ENCODE measurements at regions of chr5 and their contacts with region 1.

Region 1: GRCh38 chr5:73201547-73202513 is 28.8 kb downstream of the TMEM174 start:
- DNase-seq: peak; percentile 46 to 81 (median 69)
- ATAC-seq: peak; percentile 64 to 89 (median 78)
- H3K4me3 ChIP-seq: no peak overlapping the region
- H3K27ac ChIP-seq: no peak overlapping the region
- H3K4me1 ChIP-seq: peaks cover 0 to 7% (median 2%) of the 10 kb centered on the region in 12 donors
- H3K27me3 ChIP-seq: peaks cover 0 to 43% (median 15%) of the 10 kb centered on the region in 9 donors
- CTCF ChIP-seq: peak; percentile 47 to 72 (median 65)
- POLR2A ChIP-seq: no peak

Region 2: GRCh38 chr5:72681781-72682180 is 520.0 kb before region 1 on chr5:
- intact Hi-C with region 1: no loop called
- DNase-seq: no peak
- ATAC-seq: no peak
- H3K4me3 ChIP-seq: no peak overlapping the region
- H3K27ac ChIP-seq: no peak overlapping the region
- H3K4me1 ChIP-seq: no peaks in the 10 kb centered on the region
- H3K27me3 ChIP-seq: peaks cover 0 to 5% (median 0%) of the 10 kb centered on the region in 9 donors
- CTCF ChIP-seq: no peak
- POLR2A ChIP-seq: no peak

Region 3: GRCh38 chr5:73081093-73081492 is 120.7 kb before region 1 on chr5:
- intact Hi-C with region 1: loop called in 4 of 10 experiments (anchors 5 to 10 kb)
- DNase-seq: no peak
- ATAC-seq: no peak
- H3K4me3 ChIP-seq: no peak overlapping the region
- H3K27ac ChIP-seq: no peak overlapping the region
- H3K4me1 ChIP-seq: no peaks in the 10 kb centered on the region
- H3K27me3 ChIP-seq: no peaks in the 10 kb centered on the region
- CTCF ChIP-seq: no peak
- POLR2A ChIP-seq: no peak

Region 4: GRCh38 chr5:73088026-73088425 is 113.8 kb before region 1 on chr5:
- intact Hi-C with region 1: loop called in 5 of 10 experiments (anchors 5 to 10 kb)
- DNase-seq: no peak
- ATAC-seq: no peak
- H3K4me3 ChIP-seq: no peak overlapping the region
- H3K27ac ChIP-seq: no peak overlapping the region
- H3K4me1 ChIP-seq: no peaks in the 10 kb centered on the region
- H3K27me3 ChIP-seq: no peaks in the 10 kb centered on the region
- CTCF ChIP-seq: no peak
- POLR2A ChIP-seq: no peak

Region 5: DNA sequence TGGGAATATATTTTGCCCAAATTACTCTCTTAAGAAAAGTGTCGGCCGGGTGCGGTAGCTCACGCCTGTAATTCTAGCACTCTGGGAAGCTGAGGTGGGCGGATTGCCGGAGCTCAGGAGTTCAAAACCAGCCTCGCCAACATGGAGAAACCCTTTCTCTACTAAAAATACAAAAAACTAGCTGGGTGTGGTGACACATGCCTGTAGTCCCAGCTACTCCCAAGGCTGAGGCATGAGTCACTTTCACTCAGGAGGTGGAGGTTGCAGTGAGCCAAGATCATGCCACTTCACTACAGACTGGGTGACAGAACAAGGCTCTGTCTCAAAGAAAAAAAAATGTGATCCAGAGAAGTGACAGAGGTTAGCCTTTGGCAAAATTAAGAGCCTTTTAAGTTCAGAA is 107.9 kb before region 1 on chr5:
- intact Hi-C with region 1: loop called in 2 of 10 experiments (anchors 10 kb)
- DNase-seq: no peak
- ATAC-seq: no peak
- H3K4me3 ChIP-seq: no peak overlapping the region
- H3K27ac ChIP-seq: no peak overlapping the region
- H3K4me1 ChIP-seq: no peaks in the 10 kb centered on the region
- H3K27me3 ChIP-seq: no peaks in the 10 kb centered on the region
- CTCF ChIP-seq: no peak
- POLR2A ChIP-seq: no peak